HepG2 (cell line): ENCODE measurements at regions of chr1 and their contacts with region 1.

Region 1: DNA sequence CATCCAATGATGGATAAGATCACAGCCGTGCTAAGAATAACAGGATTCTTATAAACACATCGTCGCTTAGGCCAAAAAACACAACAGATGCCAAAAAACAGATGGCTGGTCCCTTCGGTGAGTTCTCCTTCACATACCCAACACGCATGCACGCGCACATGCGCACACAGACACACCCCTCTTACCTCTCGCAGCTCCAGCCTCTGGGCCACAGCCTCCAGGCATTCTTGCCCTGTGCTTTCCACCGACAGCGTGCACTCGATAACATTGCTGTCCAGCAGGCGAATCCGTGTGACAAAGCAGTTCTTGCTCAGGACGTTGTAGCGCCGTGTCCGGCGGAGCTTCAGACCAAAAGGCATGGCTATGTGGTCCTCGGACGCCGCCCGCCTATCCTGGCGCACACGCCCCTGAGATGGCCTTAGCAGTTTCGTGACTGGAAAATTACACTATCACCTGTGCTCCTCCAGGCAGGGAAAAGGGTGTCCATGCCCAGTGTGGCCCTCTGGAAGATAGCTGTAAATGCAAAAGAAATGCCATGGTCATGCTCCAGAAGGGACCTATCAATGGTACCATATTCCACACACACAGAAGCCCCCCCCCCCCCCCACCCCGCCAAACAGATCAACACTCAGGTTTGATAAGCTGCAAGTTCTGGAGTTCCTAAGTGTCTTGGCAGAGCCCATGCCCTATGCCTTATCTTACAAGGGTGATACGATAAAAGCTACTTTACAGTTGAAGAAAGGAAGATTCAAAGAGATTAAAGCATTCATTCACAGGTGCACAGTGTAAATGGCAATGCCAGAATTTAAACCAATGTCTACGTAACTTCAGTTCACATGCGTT is 86.7 kb downstream of the PTPN14 start:
- DNase-seq: no peak
- ATAC-seq: no peak
- H3K4me3 ChIP-seq: no peak overlapping the region
- H3K27ac ChIP-seq: no peak overlapping the region
- H3K4me1 ChIP-seq: peaks cover 31% of the 10 kb centered on the region
- H3K27me3 ChIP-seq: no peaks in the 10 kb centered on the region
- CTCF ChIP-seq: no peak
- EP300 ChIP-seq: no peak
- POLR2A ChIP-seq: no peak
- RAD21 ChIP-seq: no peak

Region 2: DNA sequence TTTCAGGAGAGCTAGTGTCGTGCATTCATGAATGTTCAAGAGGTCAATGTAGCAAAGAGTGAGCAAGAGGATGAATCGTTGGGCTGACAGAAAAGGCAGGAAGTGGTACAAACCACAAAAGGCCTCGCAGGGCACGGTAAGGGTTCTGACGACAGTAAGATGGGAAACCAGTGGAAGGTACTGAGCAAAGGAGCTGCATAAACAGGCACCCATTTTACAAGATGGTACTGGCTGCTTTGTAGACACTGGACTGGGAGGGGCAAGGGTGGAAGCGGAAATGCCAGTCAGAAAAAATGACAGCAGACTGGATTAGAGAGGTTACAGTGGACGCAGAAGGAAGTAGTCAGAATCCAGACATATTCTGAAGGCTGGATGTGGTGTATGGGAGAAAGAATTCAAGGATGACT is 36.8 kb before region 1 on chr1:
- CTCF ChIA-PET with region 1: no interaction called
- POLR2A ChIA-PET with region 1: no interaction called
- in situ Hi-C with region 1: no loop called
- intact Hi-C with region 1: no loop called
- DNase-seq: peak; percentile 41
- ATAC-seq: peak; percentile 73
- H3K4me3 ChIP-seq: no peak overlapping the region
- H3K27ac ChIP-seq: no peak overlapping the region
- H3K4me1 ChIP-seq: peaks cover 10% of the 10 kb centered on the region
- H3K27me3 ChIP-seq: no peaks in the 10 kb centered on the region; a peak in 1 of 5 replicates
- CTCF ChIP-seq: no peak
- EP300 ChIP-seq: no peak
- POLR2A ChIP-seq: no peak
- RAD21 ChIP-seq: no peak

Region 3: GRCh38 chr1:214506972-214507482 is 42.4 kb after region 1 on chr1:
- CTCF ChIA-PET with region 1: no interaction called
- POLR2A ChIA-PET with region 1: no interaction called
- in situ Hi-C with region 1: no loop called
- intact Hi-C with region 1: loop called (anchors 5 kb)
- DNase-seq: peak; percentile 93
- ATAC-seq: peak; percentile 99
- H3K4me3 ChIP-seq: peak overlapping the region in 2 of 3 experiments; percentile 28 to 36; a peak in 2 of 6 replicates
- H3K27ac ChIP-seq: no peak overlapping the region
- H3K4me1 ChIP-seq: peaks cover 51% of the 10 kb centered on the region
- H3K27me3 ChIP-seq: no peaks in the 10 kb centered on the region
- CTCF ChIP-seq: no peak
- EP300 ChIP-seq: peak in 1 of 2 experiments; percentile 67; a peak in 2 of 4 replicates
- POLR2A ChIP-seq: no peak
- RAD21 ChIP-seq: no peak

Region 4: GRCh38 chr1:214537219-214537618 is 72.6 kb after region 1 on chr1:
- CTCF ChIA-PET with region 1: no interaction called
- POLR2A ChIA-PET with region 1: no interaction called
- in situ Hi-C with region 1: no loop called
- intact Hi-C with region 1: no loop called
- DNase-seq: no peak
- ATAC-seq: no peak
- H3K4me3 ChIP-seq: no peak overlapping the region
- H3K27ac ChIP-seq: no peak overlapping the region
- H3K4me1 ChIP-seq: no peaks in the 10 kb centered on the region
- H3K27me3 ChIP-seq: no peaks in the 10 kb centered on the region
- CTCF ChIP-seq: no peak
- EP300 ChIP-seq: no peak
- POLR2A ChIP-seq: no peak
- RAD21 ChIP-seq: no peak